Motor neuron (in vitro differentiated cells): ENCODE measurements at regions of chr13 and their contacts with region 1.

Region 1: DNA sequence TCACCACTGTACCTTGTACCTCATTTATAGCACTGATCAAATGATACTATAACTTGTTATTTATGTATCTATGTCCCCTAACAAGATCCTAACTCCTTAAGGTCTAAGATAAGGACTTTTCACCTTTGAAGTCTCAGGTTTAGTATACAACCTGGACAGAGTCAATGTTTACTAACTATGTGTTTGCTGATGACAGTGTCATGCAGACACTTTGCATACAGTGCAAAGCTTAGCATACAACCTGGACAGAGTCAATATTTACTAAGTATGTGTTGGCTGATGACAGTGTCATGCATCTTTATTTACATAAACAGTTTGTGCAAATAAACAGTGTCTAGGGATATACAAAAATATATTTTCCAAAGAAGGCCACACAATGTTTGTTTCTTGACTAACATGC is 34.7 kb downstream of the DCT start:
- ATAC-seq: no peak
- H3K4me3 ChIP-seq: no peak overlapping the region
- H3K27ac ChIP-seq: no peak overlapping the region
- H3K4me1 ChIP-seq: no peaks in the 10 kb centered on the region

Region 2: GRCh38 chr13:94617389-94618000 is 172.7 kb after region 1 on chr13:
- in situ Hi-C with region 1: loop called in 5 of 9 experiments (anchors 10 to 25 kb)
- ATAC-seq: peak in 4 of 8 experiments; percentile 36 to 44 (median 42)
- H3K4me3 ChIP-seq: no peak overlapping the region
- H3K27ac ChIP-seq: no peak overlapping the region
- H3K4me1 ChIP-seq: peaks cover 0 to 3% of the 10 kb centered on the region in 2 donors

Region 3: GRCh38 chr13:94731028-94731427 is 286.2 kb after region 1 on chr13:
- in situ Hi-C with region 1: no loop called
- ATAC-seq: no peak
- H3K4me3 ChIP-seq: no peak overlapping the region
- H3K27ac ChIP-seq: no peak overlapping the region
- H3K4me1 ChIP-seq: no peaks in the 10 kb centered on the region